CD4-positive, alpha-beta T cell (primary cell): ENCODE measurements at regions of chrX and their contacts with region 1.

Region 1: GRCh38 chrX:39814391-39814790 is 283.4 kb downstream of the BCOR start:
- DNase-seq: peak in 13 of 14 experiments; percentile 9 to 75 (median 33)
- ATAC-seq: peak; percentile 63
- H3K4me3 ChIP-seq: no peak overlapping the region
- H3K4me3 Mint-ChIP-seq: no peak overlapping the region
- H3K27ac ChIP-seq: no peak overlapping the region
- H3K27ac Mint-ChIP-seq: no peak overlapping the region
- H3K4me1 ChIP-seq: peaks cover 14% of the 10 kb centered on the region
- H3K4me1 Mint-ChIP-seq: peaks cover 18% of the 10 kb centered on the region
- H3K27me3 ChIP-seq: no peaks in the 10 kb centered on the region
- H3K27me3 Mint-ChIP-seq: no peaks in the 10 kb centered on the region
- CTCF ChIP-seq: peak; percentile 40

Region 2: GRCh38 chrX:39854772-39855747 is 40.7 kb after region 1 on chrX:
- CTCF ChIA-PET with region 1: interaction called, 7 read pairs
- POLR2A ChIA-PET with region 1: interaction called, 5 read pairs
- intact Hi-C with region 1: loop called (anchors 2 to 5 kb)
- DNase-seq: peak; percentile 55 to 93 (median 66)
- ATAC-seq: peak; percentile 86
- H3K4me3 ChIP-seq: peak overlapping the region; percentile 44
- H3K4me3 Mint-ChIP-seq: peak overlapping the region; percentile 82
- H3K27ac ChIP-seq: peak overlapping the region; percentile 92 to 97
- H3K27ac Mint-ChIP-seq: peak overlapping the region; percentile 96
- H3K4me1 ChIP-seq: peaks cover 79% of the 10 kb centered on the region
- H3K4me1 Mint-ChIP-seq: peaks cover 68% of the 10 kb centered on the region
- H3K27me3 ChIP-seq: no peaks in the 10 kb centered on the region
- H3K27me3 Mint-ChIP-seq: no peaks in the 10 kb centered on the region
- CTCF ChIP-seq: no peak

Region 3: DNA sequence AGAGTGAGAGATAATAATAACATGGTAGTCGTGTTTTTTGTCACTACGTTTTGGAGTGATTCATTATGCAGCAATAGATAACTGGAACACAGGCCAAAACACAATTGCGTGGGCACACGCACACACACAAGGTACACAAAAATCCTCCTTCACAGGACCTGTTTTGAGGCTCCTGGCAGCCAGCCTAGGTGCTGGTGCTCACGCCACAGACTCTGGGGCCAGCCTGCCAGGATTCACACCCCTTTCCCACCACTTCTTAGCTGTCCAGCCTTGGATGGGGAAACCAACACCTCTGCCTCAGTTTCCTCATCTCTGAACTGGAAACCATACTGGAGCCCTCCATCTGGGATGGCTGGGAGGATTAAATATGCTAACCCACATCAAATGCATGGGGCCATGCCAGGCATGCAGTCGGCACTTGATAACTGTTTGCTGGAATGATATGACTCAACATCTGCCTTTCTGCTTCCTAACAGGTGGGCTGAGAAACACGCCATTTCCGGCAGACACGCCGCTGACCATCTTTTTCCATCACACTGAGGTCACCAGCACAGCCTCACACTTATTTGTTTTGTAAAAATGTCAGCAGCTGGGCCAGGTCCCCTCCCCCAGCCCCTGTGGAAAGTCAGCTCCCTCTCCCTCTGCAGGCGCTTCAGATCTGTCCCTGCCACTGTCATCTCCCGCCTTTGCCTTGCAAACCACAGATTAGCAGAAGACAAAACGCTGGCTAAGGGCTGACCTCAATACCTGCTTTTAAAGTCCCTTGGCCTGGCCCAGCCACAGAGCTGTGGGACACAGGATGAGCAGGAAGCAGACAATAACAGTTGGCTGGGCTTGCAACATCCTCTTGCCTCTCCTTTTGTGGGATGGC is 45.8 kb after region 1 on chrX:
- CTCF ChIA-PET with region 1: interaction called, 7 read pairs
- POLR2A ChIA-PET with region 1: interaction called, 5 read pairs
- intact Hi-C with region 1: loop called in 1 of 2 experiments (anchors 2 kb)
- DNase-seq: peak in 13 of 14 experiments; percentile 34 to 82 (median 63)
- ATAC-seq: peak; percentile 41
- H3K4me3 ChIP-seq: no peak overlapping the region
- H3K4me3 Mint-ChIP-seq: peak overlapping the region; percentile 30
- H3K27ac ChIP-seq: no peak overlapping the region
- H3K27ac Mint-ChIP-seq: peak overlapping the region; percentile 87
- H3K4me1 ChIP-seq: peaks cover 40% of the 10 kb centered on the region
- H3K4me1 Mint-ChIP-seq: peaks cover 28% of the 10 kb centered on the region
- H3K27me3 ChIP-seq: no peaks in the 10 kb centered on the region
- H3K27me3 Mint-ChIP-seq: no peaks in the 10 kb centered on the region
- CTCF ChIP-seq: no peak

Region 4: DNA sequence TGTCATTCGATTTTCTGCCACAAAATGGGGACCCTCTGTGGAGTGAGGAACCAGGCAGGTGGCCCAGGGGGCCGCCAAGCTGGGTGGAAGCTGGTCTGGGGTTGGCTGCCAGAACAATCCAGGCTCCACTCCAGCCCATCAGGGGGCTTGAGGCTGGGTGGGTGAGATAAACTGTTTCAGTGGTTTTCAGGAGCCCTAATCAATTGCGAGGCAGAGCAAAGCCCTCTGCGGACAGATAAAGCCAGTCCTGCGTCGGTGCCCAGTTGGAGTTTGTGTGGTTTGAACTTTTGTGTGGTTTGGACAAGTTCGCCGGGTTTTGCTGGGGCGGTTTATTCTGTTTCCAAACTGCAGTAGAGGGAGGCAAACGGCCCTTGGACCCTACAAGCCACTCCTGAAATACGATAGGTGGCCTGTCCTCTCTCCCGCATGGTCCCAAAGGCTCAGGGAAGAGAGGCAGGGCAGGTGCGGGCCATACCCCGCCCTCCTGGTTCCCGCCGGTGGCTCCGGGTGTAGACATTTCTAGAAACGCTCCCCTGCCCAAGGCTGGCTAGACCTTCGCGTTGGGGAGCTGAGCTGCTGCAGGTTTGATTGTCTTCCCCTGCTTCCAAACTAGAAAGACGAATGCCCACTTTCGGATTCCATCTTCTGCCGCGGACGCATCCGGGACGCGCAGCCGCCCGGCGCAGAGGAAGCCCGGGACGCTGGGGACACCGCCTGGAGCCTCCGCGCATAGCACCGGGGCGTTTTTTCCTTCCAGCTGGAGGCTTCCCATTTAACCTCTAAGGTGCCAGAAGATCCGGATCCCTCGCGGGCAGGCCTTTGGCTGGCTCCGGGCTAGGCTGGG is 452.3 kb after region 1 on chrX:
- CTCF ChIA-PET with region 1: interaction called, 4 read pairs
- POLR2A ChIA-PET with region 1: no interaction called
- intact Hi-C with region 1: loop called in 1 of 2 experiments (anchors 2 kb)
- DNase-seq: peak; percentile 15 to 74 (median 42)
- ATAC-seq: peak; percentile 83
- H3K4me3 ChIP-seq: peak overlapping the region; percentile 67
- H3K4me3 Mint-ChIP-seq: peak overlapping the region; percentile 85
- H3K27ac ChIP-seq: no peak overlapping the region
- H3K27ac Mint-ChIP-seq: no peak overlapping the region
- H3K4me1 ChIP-seq: peaks cover 14% of the 10 kb centered on the region
- H3K4me1 Mint-ChIP-seq: peaks cover 6% of the 10 kb centered on the region
- H3K27me3 ChIP-seq: no peaks in the 10 kb centered on the region
- H3K27me3 Mint-ChIP-seq: no peaks in the 10 kb centered on the region
- CTCF ChIP-seq: peak; percentile 67

Region 5: DNA sequence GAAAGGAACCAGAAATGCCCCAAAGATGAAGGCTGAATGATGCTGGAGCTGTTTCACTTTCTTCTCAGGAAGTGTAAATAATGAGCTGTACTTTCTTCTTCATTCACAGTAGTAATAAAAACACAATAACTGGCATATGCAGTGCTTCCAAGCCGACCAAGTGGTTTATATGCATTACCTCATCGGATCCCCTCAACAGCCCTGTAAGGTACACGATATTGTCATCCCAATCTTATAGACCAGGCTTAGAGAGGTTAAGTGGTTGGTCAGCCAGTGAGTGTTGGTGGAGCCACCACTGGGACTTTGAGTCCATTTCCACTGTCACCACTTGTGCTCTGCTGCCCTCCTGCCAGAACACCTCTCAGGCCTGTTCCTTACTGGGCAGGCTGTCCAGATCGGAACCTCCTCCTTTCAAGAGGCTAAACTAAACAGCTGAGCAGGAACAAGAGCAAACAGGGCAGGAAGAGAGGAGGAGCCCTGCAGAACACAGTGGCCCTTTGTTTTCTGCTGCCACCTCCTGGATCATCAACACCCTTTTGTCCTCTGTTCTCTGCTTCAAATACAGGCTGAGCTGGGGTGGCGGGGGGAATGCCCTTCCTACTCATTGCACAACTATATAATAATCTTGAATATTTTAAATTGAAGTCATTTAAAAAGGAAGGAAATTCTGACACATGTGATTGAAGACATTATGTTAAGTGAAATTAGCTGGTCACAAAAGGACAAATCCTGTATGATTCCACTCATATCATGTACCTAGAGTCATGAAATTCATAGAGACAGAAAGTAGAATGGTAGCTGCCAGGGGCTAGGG is 653.8 kb after region 1 on chrX:
- CTCF ChIA-PET with region 1: no interaction called
- POLR2A ChIA-PET with region 1: no interaction called
- intact Hi-C with region 1: loop called in 1 of 2 experiments (anchors 2 kb)
- DNase-seq: peak in 8 of 14 experiments; percentile 4 to 60 (median 38)
- ATAC-seq: peak; percentile 52
- H3K4me3 ChIP-seq: no peak overlapping the region
- H3K4me3 Mint-ChIP-seq: no peak overlapping the region
- H3K27ac ChIP-seq: no peak overlapping the region
- H3K27ac Mint-ChIP-seq: no peak overlapping the region
- H3K4me1 ChIP-seq: peaks cover 27% of the 10 kb centered on the region
- H3K4me1 Mint-ChIP-seq: peaks cover 41% of the 10 kb centered on the region
- H3K27me3 ChIP-seq: no peaks in the 10 kb centered on the region
- H3K27me3 Mint-ChIP-seq: no peaks in the 10 kb centered on the region
- CTCF ChIP-seq: peak; percentile 19